Activated B cell treated with CpG ODN at 0.5 μM for 24 hours (primary cell): ENCODE measurements at regions of chr13 and their contacts with region 1.

Region 1: DNA sequence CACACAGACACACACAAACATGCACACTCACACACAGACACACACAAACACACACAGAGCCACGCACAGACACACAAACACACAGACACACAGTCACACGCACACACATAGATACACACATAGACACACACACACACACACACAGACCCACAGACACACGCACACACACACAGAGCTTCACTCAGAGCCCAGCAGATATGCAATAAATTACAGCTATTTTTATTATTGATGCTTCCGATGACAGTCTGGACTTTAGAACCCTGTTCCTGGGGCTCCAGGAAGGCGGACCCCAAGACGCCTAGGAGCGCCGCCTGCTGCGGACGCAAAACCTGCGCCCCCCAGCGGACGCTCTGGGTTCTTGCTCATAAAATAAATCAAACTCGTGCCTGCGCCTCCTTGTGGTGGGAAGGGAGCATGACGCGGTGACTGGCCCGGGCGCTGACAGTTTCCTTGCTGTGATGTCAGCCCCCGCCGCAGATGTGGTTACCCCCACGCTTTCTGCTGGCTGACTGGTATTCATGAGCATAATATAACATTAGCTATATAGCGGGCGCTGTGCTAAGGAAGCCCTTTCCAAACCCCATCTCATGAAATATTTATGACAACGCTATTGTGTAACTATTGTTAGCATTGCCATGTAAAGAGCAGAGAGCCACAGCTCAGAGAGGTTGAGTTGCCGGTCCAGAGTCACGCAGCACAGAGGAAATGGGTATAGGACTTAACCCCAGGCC is 64.4 kb upstream of the TM9SF2 start:
- DNase-seq: peak; percentile 87
- ATAC-seq: peak; percentile 59
- H3K4me3 Mint-ChIP-seq: peak overlapping the region; percentile 66
- H3K27ac Mint-ChIP-seq: peak overlapping the region; percentile 76
- H3K4me1 Mint-ChIP-seq: peaks cover 66% of the 10 kb centered on the region
- H3K27me3 Mint-ChIP-seq: peaks cover 2% of the 10 kb centered on the region
- CTCF ChIP-seq: peak; percentile 99

Region 2: DNA sequence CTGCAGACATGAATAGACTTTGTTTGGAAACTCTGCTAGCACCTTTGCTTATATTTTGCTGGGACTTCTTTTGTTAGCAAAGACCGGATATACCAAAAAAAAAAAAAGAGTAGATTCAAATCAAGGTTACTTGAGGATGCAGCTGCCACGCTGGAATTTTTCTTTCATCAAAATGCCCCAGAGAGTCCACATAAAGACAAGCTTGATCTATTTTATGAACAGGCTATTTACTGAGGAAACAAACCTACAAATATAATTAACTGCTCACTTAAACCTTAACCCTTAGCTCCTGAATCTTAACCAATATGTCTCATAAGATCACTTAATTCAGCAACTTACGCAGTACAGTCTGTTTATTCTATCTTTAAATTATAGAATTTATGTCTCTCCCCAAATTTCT is 431.9 kb before region 1 on chr13:
- CTCF ChIA-PET with region 1: no interaction called
- POLR2A ChIA-PET with region 1: no interaction called
- intact Hi-C with region 1: no loop called
- DNase-seq: no peak
- ATAC-seq: no peak
- H3K4me3 Mint-ChIP-seq: no peak overlapping the region
- H3K27ac Mint-ChIP-seq: no peak overlapping the region
- H3K4me1 Mint-ChIP-seq: peaks cover 1% of the 10 kb centered on the region
- H3K27me3 Mint-ChIP-seq: peaks cover 2% of the 10 kb centered on the region
- CTCF ChIP-seq: no peak

Region 3: DNA sequence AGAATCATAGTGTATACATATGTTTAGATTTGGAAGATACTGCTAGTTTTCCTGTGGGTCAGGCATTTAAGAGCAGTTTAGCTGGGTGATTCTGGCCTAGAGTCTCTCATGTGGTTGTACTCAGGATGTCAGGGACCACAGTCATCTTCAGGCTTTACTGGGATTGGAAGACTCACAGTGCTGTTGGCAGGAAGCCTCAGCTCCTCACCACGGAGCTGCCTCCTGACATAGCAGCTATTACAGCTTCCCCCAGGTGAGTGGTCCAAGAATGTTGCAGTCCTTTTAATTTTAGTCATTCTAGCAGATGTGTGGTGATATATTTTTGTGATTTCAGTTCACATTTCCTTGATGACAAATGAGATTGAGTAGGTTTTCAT is 161.8 kb before region 1 on chr13:
- CTCF ChIA-PET with region 1: interaction called, 342 read pairs
- POLR2A ChIA-PET with region 1: interaction called, 45 read pairs
- intact Hi-C with region 1: no loop called
- DNase-seq: no peak
- ATAC-seq: no peak
- H3K4me3 Mint-ChIP-seq: no peak overlapping the region
- H3K27ac Mint-ChIP-seq: peak overlapping the region; percentile 25
- H3K4me1 Mint-ChIP-seq: peaks cover 90% of the 10 kb centered on the region
- H3K27me3 Mint-ChIP-seq: no peaks in the 10 kb centered on the region
- CTCF ChIP-seq: no peak

Region 4: GRCh38 chr13:99356158-99357091 is 80.4 kb before region 1 on chr13:
- CTCF ChIA-PET with region 1: interaction called, 6 read pairs
- POLR2A ChIA-PET with region 1: no interaction called
- intact Hi-C with region 1: loop called (anchors 1 kb)
- DNase-seq: peak; percentile 40
- ATAC-seq: peak; percentile 49
- H3K4me3 Mint-ChIP-seq: peak overlapping the region; percentile 70
- H3K27ac Mint-ChIP-seq: peak overlapping the region; percentile 94
- H3K4me1 Mint-ChIP-seq: peaks cover 97% of the 10 kb centered on the region
- H3K27me3 Mint-ChIP-seq: no peaks in the 10 kb centered on the region
- CTCF ChIP-seq: no peak

Region 5: GRCh38 chr13:99419591-99420243 is 17.1 kb before region 1 on chr13:
- CTCF ChIA-PET with region 1: interaction called, 27 read pairs
- POLR2A ChIA-PET with region 1: interaction called, 43 read pairs
- intact Hi-C with region 1: loop called (anchors 1 kb)
- DNase-seq: no peak
- ATAC-seq: no peak
- H3K4me3 Mint-ChIP-seq: peak overlapping the region; percentile 80
- H3K27ac Mint-ChIP-seq: peak overlapping the region; percentile 96
- H3K4me1 Mint-ChIP-seq: peaks cover 72% of the 10 kb centered on the region
- H3K27me3 Mint-ChIP-seq: no peaks in the 10 kb centered on the region
- CTCF ChIP-seq: no peak

Region 6: DNA sequence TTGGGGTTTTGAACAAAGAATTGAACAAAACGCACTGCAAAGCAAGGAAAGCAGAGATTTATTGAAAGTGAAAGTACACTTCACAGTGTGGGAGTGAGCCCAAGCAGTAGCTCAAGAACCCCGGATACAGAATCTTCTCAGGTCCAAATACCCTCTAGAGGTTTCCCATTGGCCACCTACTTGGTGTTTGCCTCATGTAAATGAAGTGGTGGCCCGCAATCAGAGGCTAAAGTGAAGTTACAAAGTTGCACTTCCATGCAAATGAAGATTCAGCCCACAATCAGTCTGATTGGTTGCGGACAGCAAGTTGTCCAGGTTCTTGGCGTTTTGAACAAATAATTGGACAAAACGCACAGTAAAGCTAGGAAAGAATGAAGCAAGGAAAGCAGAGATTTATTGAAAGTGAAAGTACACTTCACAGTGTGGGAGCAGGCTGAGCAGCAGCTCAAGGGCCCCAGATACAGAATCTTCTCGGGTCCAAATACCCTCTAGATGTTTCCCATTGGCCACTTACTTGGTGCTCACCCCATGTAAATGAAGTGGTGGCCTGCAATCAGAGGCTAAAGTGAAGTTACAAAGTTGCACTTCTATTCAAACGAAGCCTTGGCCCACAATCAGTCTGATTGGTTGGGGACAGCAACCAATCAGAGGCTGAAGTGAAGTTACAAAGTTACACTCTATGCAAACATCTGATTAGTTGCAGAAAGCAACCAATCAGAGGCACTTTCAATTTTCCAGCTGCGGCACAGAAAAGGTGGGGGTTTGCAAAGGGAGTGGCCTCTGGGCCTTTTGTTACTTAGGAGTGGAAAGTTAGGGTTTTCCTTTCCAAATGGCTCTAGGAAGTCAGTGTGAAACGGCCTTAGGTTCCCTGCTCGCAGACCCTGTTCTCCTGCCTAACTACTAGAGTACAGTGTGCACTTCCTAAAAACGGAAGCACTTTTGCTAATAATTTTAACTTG is 59.6 kb after region 1 on chr13:
- CTCF ChIA-PET with region 1: no interaction called
- POLR2A ChIA-PET with region 1: no interaction called
- intact Hi-C with region 1: no loop called
- DNase-seq: no peak
- ATAC-seq: peak; percentile 25
- H3K4me3 Mint-ChIP-seq: peak overlapping the region; percentile 82
- H3K27ac Mint-ChIP-seq: peak overlapping the region; percentile 92
- H3K4me1 Mint-ChIP-seq: peaks cover 62% of the 10 kb centered on the region
- H3K27me3 Mint-ChIP-seq: no peaks in the 10 kb centered on the region
- CTCF ChIP-seq: no peak

Region 7: GRCh38 chr13:99566125-99567083 is 129.6 kb after region 1 on chr13:
- CTCF ChIA-PET with region 1: no interaction called
- POLR2A ChIA-PET with region 1: no interaction called
- intact Hi-C with region 1: no loop called
- DNase-seq: no peak
- ATAC-seq: peak; percentile 14
- H3K4me3 Mint-ChIP-seq: peak overlapping the region; percentile 64
- H3K27ac Mint-ChIP-seq: peak overlapping the region; percentile 37
- H3K4me1 Mint-ChIP-seq: peaks cover 2% of the 10 kb centered on the region
- H3K27me3 Mint-ChIP-seq: no peaks in the 10 kb centered on the region
- CTCF ChIP-seq: no peak

Region 8: DNA sequence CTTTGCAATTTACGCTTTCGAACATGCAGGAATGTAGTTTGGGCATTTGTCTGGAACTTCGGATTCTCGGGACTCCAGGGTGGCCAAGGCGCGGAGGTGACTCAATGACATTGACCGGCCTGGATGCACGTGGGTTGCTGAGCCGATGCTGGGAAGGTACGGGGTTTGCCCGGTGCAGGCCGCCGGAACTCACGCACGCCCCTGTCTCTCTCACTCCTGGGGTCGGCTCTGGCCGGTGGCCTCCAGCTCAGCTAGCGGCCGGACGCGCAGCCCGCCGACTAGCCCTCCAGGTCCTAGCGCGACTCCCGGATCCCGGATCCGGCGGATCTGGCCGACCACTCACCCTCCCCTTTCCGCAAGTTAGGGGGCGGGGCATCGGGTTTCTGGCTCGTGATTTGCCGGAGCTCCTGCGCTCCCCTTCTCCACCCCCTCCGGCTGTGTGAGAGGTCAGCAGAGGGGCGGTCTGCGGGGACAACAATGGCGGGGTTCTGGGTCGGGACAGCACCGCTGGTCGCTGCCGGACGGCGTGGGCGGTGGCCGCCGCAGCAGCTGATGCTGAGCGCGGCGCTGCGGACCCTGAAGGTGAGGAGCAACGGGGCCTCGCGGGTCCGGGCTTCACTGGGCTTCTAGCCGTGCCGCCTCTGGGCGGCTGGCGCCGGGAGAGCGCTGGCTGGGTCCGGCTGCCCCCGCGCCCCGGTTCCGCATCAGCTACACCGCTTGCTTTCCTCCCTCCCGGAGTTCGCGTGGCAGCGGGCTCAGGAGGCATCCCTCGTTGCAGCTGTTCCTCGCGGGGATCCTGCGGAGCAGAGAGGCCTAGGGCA is 652.0 kb after region 1 on chr13 and contains the start of gene PCCA:
- CTCF ChIA-PET with region 1: no interaction called
- POLR2A ChIA-PET with region 1: no interaction called
- intact Hi-C with region 1: no loop called
- DNase-seq: peak; percentile 72
- ATAC-seq: peak; percentile 94
- H3K4me3 Mint-ChIP-seq: peak within 1 kb of the TSS; percentile 82
- H3K27ac Mint-ChIP-seq: peak within 1 kb of the TSS; percentile 37
- H3K4me1 Mint-ChIP-seq: peaks cover 16% of the 10 kb centered on the region
- H3K27me3 Mint-ChIP-seq: no peaks in the 10 kb centered on the region
- CTCF ChIP-seq: no peak
- total RNA-seq, gene PCCA: 11.4 and 15.3 TPM in 2 replicates